ENCODE measurements at regions of chr20 and their contacts with region 1.

Region 1: DNA sequence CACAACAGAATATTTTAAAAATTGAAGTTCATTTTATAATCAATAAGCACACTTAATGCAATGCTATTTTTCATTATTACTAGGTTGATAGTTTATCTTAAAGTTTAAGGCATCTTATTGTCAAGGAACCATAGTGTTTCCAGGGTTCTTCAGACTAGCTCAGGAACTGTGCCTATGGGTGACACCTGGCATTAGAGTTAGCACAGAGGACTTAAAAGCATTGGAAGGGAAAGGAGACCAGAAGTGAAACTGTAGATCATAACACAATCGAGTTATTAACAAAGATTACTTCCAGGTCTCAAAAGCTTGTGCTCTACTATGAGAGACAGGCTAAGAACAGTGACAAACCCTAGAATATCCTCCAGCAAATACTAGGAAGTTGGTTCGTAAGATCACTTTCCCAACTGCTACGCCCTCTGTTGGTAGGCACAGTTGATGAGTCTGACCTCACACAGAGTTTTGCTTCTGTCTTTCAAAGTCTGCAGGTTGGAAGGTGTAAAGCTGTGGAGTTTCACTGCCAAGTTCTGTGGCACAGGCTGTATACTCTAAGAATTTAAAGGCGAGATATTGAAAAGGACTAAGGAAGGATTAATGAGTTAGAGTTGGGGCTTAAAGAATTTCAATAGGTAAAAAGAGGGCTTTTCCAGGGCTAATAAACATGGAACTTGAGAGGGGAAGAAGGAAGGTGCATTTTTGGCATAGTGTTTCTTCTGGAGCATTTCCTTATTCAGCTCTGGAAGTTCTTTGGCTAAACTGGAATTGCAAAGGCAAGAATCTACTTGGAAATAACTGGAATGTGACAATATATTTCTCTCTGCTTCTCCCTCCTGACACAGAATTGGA is 531.3 kb upstream of the JAG1 start:
- DNase-seq: peak in 1 of 2 experiments; percentile 54
- H3K4me3 ChIP-seq: no peak overlapping the region
- H3K27ac ChIP-seq: no peak overlapping the region
- H3K4me1 ChIP-seq: peaks cover 7% of the 10 kb centered on the region; the same call in 1 of the 2 replicates
- H3K27me3 ChIP-seq: no peaks in the 10 kb centered on the region
- CTCF ChIP-seq: peak; percentile 68

Region 2: DNA sequence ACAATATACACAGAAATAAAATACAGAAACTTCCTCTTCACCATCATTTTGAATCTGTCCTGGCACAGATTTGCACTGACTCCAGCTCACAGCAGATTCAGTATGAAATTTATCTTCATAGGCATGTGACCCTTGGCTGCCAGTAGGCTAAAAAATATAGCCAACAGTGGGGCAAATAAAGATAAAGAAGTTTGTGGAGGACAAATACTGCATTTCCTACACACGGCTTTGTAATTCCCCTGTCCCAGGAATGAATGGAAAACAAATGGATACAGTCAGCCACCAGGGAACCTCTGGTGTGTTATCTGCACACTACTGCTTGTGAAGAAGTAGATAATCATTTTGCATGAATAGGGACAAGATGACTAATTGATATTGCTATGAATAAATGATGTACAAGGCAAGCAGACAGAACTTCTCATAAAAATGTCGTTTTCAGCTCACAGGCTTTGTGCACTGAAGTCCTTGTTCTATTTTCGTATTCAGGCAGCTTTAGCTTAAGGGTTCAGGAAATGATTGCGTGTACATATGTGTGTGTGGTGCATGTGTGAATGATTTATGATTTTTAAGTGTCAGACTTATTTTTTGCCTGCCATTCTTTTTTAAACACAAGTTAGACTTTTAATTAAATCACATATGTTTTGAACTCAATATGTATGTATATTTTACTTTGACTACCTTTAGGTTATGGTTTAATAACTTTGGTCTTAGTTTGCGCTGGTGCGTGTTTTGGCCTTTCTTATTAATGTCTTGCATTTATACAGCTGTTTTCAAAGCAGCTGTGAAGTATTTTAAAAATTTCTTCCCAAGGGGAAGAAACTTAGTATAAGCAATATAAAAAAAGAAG is 12.4 kb after region 1 on chr20:
- CTCF ChIA-PET with region 1: no interaction called
- POLR2A ChIA-PET with region 1: interaction called, 13 read pairs
- intact Hi-C with region 1: no loop called
- DNase-seq: no peak
- H3K4me3 ChIP-seq: no peak overlapping the region
- H3K27ac ChIP-seq: no peak overlapping the region
- H3K4me1 ChIP-seq: no peaks in the 10 kb centered on the region
- H3K27me3 ChIP-seq: no peaks in the 10 kb centered on the region
- CTCF ChIP-seq: no peak

Region 3: GRCh38 chr20:11261533-11262000 is 56.4 kb after region 1 on chr20:
- CTCF ChIA-PET with region 1: no interaction called
- POLR2A ChIA-PET with region 1: no interaction called
- intact Hi-C with region 1: no loop called
- DNase-seq: no peak
- H3K4me3 ChIP-seq: no peak overlapping the region
- H3K27ac ChIP-seq: no peak overlapping the region
- H3K4me1 ChIP-seq: peaks cover 5% of the 10 kb centered on the region
- H3K27me3 ChIP-seq: no peaks in the 10 kb centered on the region
- CTCF ChIP-seq: no peak

Region 4: GRCh38 chr20:11469795-11470435 is 264.8 kb after region 1 on chr20:
- CTCF ChIA-PET with region 1: no interaction called
- POLR2A ChIA-PET with region 1: no interaction called
- intact Hi-C with region 1: no loop called
- DNase-seq: no peak
- H3K4me3 ChIP-seq: no peak overlapping the region
- H3K27ac ChIP-seq: no peak overlapping the region
- H3K4me1 ChIP-seq: no peaks in the 10 kb centered on the region
- H3K27me3 ChIP-seq: no peaks in the 10 kb centered on the region
- CTCF ChIP-seq: no peak

Region 5: DNA sequence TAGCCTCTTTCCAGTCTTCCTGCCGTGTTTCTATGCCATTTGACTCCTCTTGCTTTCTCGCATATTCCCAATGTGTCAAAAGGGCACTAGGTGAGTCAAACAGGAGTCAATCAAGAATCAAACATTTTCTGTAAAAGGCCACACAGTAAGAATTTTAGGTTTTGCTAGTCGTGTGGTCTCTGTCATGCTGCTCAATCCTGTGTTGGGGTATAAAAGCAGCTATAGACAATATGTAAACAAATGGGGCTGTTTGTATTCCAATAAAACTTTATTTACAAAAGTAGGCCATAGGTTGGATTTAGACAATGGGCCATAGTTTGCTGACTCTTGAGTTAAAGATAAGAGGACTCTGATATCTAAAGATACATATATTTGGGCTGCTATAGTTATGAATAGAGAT is 477.1 kb after region 1 on chr20:
- CTCF ChIA-PET with region 1: no interaction called
- POLR2A ChIA-PET with region 1: no interaction called
- intact Hi-C with region 1: no loop called
- DNase-seq: no peak
- H3K4me3 ChIP-seq: no peak overlapping the region
- H3K27ac ChIP-seq: no peak overlapping the region
- H3K4me1 ChIP-seq: no peaks in the 10 kb centered on the region
- H3K27me3 ChIP-seq: no peaks in the 10 kb centered on the region
- CTCF ChIP-seq: no peak

Measured in PC-9 (cell line).